CD8-positive, alpha-beta T cell (primary cell): ENCODE measurements at regions of chr19 and their contacts with region 1.

Region 1: DNA sequence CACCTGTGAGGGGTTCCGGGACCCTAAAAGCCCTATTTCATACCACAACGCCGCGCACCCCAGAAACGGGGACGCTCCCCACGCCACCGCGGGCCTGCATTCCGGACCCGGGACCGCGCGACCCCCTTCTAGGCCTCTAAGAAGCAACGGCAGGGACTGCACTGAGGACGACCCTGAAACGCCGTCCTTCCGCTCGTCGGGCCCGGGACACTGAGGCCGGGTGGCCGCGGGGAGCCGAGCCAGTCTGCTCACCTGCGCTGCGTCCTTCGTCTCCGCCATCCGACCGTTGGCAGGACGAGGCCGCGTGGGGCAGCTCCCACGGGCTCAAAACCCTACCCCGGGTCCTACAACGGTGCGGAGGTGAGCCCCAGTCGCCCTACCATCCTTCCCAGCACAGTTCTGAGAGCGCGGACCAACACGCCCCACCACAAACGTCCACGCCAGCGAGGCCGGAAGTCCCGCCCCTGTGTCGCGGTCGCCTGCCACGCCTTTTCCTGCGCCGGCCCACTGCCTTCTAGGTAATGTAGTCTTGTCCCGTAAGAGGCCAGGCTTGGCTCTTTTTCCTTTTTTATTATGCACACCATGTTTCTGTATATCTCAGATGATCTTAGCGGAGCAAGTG is at the start of gene ZNF550:
- DNase-seq: peak; percentile 74 to 92 (median 88)
- ATAC-seq: peak; percentile 96
- H3K4me3 ChIP-seq: peak within 1 kb of the TSS; percentile 77 to 89
- H3K4me3 Mint-ChIP-seq: peak within 1 kb of the TSS; percentile 98
- H3K27ac ChIP-seq: peak within 1 kb of the TSS; percentile 64 to 70
- H3K27ac Mint-ChIP-seq: peak within 1 kb of the TSS; percentile 96
- H3K4me1 ChIP-seq: peaks cover 20% of the 10 kb centered on the region
- H3K4me1 Mint-ChIP-seq: peaks cover 32% of the 10 kb centered on the region
- H3K27me3 ChIP-seq: no peaks in the 10 kb centered on the region
- H3K27me3 Mint-ChIP-seq: no peaks in the 10 kb centered on the region
- CTCF ChIP-seq: no peak
- total RNA-seq, gene ZNF550: 15.4 to 17.6 TPM

Region 2: GRCh38 chr19:57366776-57367175 is 192.7 kb before region 1 on chr19:
- CTCF ChIA-PET with region 1: no interaction called
- POLR2A ChIA-PET with region 1: no interaction called
- intact Hi-C with region 1: no loop called
- DNase-seq: no peak
- ATAC-seq: no peak
- H3K4me3 ChIP-seq: no peak overlapping the region
- H3K4me3 Mint-ChIP-seq: no peak overlapping the region
- H3K27ac ChIP-seq: no peak overlapping the region
- H3K27ac Mint-ChIP-seq: no peak overlapping the region
- H3K4me1 ChIP-seq: peaks cover 12% of the 10 kb centered on the region
- H3K4me1 Mint-ChIP-seq: peaks cover 18% of the 10 kb centered on the region
- H3K27me3 ChIP-seq: no peaks in the 10 kb centered on the region
- H3K27me3 Mint-ChIP-seq: no peaks in the 10 kb centered on the region
- CTCF ChIP-seq: no peak

Region 3: DNA sequence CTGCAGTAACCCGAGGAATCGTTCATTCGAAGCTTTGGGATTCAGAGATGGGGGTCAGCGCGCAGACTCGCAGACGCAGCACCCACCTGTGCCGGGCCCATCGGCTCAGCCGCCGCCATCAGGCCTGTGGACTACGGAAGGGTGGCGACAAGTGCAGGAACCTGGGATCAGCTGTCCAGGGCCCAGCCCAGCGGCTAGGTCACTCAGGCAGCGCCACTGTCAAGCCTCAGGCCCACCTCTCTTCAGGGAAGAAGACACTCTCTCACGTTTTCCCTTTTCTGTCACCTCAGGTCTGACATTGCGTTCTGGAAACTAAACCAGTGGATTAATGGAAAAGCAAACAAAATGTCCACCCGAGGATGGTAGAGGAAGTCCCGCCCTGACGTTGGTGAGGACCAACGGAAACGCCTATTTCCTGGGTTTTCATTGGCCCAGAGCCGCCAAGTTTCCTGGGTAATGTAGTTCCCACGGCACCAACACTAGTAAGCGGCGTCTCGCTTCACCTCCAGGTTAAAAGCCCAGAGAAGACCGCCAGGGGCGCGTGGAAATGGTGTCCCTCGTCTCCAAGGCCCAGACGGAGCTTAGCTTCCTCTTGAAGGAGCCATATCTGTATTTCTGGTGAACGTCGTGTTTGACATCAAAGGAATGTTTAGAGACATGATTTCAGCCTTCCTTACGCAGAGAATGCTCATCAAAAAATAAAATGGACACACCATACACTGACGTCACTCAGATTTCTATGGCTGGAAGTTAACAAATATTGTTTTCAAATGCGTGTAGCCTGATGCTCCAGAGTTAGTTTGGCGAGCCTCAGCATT is 82.1 kb before region 1 on chr19 and contains the start of gene ZNF772:
- CTCF ChIA-PET with region 1: no interaction called
- POLR2A ChIA-PET with region 1: interaction called, 3 read pairs
- intact Hi-C with region 1: loop called in 1 of 2 experiments (anchors 1 kb)
- DNase-seq: peak; percentile 76 to 95 (median 88)
- ATAC-seq: peak; percentile 99
- H3K4me3 ChIP-seq: peak within 1 kb of the TSS; percentile 78 to 86
- H3K4me3 Mint-ChIP-seq: peak within 1 kb of the TSS; percentile 88
- H3K27ac ChIP-seq: peak within 1 kb of the TSS; percentile 47 to 83
- H3K27ac Mint-ChIP-seq: peak within 1 kb of the TSS; percentile 92
- H3K4me1 ChIP-seq: peaks cover 8% of the 10 kb centered on the region
- H3K4me1 Mint-ChIP-seq: peaks cover 14% of the 10 kb centered on the region
- H3K27me3 ChIP-seq: peaks cover 0 to 2% of the 10 kb centered on the region in 2 experiments
- H3K27me3 Mint-ChIP-seq: peaks cover 2% of the 10 kb centered on the region
- CTCF ChIP-seq: peak; percentile 65
- total RNA-seq, gene ZNF772: 0.41 to 0.97 TPM

Region 4: DNA sequence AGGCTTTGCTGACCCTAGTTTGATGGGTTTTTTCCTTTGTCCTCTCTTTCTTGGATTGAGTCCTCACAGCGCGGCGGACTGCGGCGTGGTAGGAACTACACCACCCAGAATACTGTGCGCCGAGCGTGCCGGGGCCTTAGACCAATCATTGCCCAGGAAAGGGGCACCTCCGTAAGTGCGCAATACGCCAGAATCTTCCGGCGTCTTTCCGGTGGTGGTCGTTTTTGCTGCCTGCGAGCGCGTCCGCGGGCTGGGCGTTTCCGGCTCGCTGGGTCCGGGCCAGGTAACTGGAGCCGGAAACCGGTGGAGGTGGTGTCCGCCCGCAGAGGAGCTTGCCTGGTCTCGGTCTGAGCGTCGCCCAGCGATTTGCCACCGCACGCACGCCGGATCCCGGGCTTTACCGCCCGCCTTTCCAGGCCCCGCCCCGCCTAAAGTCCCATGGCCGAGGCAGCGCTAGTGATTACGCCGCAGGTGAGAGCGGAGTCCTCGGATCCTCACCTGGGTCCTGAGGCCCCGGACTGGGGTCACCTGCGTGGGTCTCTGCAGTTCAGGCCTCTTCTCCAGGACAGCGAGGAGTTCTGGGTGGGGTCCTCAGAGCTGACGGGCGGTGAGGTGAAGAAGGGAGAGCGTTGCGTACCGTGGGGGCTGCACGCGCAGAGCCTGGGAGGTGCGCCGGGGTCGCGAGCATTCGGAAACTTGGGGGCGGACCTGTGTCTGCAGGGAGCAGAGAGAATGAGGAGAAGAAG is 32.2 kb before region 1 on chr19 and contains the start of gene ZNF549:
- CTCF ChIA-PET with region 1: no interaction called
- POLR2A ChIA-PET with region 1: no interaction called
- intact Hi-C with region 1: loop called (anchors 1 kb)
- DNase-seq: peak; percentile 77 to 95 (median 89)
- ATAC-seq: peak; percentile 98
- H3K4me3 ChIP-seq: peak within 1 kb of the TSS; percentile 97
- H3K4me3 Mint-ChIP-seq: peak within 1 kb of the TSS; percentile 94
- H3K27ac ChIP-seq: peak within 1 kb of the TSS; percentile 80 to 88
- H3K27ac Mint-ChIP-seq: peak within 1 kb of the TSS; percentile 96
- H3K4me1 ChIP-seq: peaks cover 16% of the 10 kb centered on the region
- H3K4me1 Mint-ChIP-seq: peaks cover 32% of the 10 kb centered on the region
- H3K27me3 ChIP-seq: no peaks in the 10 kb centered on the region
- H3K27me3 Mint-ChIP-seq: no peaks in the 10 kb centered on the region
- CTCF ChIP-seq: no peak
- total RNA-seq, gene ZNF549: 14.6 to 17.1 TPM

Region 5: DNA sequence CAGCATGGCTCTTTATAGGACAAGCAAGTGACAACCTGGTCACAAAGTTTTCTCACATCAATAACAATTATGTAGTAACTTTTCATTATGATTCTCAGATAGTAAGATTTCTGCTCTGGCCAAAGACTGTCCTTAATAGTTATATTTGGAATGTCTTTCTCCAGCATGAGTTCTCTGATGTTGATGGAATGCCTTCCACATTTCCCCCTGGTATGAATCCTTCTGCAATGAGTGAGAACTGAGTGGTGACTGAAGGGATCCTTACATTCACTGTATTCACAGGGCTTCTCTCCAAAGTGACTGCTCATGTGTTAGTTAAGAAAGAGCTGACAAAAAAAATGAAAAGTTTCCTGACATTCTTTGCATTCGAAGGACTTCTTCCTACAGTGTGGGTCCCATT is 13.0 kb before region 1 on chr19:
- CTCF ChIA-PET with region 1: no interaction called
- POLR2A ChIA-PET with region 1: no interaction called
- intact Hi-C with region 1: no loop called
- DNase-seq: no peak
- ATAC-seq: no peak
- H3K4me3 ChIP-seq: peak overlapping the region in 1 of 2 experiments; percentile 4
- H3K4me3 Mint-ChIP-seq: no peak overlapping the region
- H3K27ac ChIP-seq: no peak overlapping the region
- H3K27ac Mint-ChIP-seq: no peak overlapping the region
- H3K4me1 ChIP-seq: no peaks in the 10 kb centered on the region
- H3K4me1 Mint-ChIP-seq: no peaks in the 10 kb centered on the region
- H3K27me3 ChIP-seq: no peaks in the 10 kb centered on the region
- H3K27me3 Mint-ChIP-seq: no peaks in the 10 kb centered on the region
- CTCF ChIP-seq: no peak

Region 6: DNA sequence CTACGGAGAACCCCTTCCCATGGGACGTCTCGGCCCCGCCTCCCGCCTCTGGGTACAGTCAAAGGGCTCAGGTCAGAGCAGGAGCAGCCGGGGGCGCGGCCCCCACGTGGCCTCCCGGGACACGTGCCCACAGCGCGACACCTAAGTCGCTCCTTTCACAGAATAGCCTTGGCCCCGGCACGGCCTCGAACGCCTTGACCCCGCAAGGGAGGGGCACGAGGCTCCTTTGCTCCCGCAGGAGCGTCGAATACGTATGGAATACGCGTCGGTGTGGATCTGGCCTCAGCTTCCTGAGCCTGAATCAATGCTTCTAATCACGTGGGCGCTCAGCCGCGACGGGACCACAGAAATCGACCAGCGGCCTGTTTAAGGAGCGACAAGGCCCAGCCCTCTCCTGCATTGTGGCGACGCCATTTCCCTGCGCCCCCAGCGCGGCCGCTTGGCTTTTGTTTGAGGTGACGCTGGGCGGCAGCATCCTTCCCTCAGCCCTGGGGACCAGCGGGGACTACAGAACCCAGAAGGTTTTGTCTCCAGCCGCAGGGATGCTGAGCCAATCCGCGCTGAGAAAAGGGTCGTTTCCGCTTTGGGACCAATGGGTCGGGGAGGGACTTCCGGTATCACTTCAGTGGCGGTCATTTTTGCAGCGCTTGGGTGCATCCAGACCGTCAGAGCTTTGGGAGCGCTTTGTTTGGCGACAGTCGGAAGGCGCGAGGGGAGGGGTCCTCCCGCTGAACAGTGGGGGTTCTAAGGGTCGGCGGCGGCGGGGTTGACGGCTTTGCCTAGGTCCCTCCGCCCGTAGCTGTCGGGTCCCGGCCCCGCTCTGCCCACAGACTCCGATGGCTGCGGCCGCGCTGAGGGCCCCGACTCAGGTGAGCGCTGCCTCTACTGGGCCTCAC is 24.3 kb after region 1 on chr19 and contains the start of gene ZIK1:
- CTCF ChIA-PET with region 1: no interaction called
- POLR2A ChIA-PET with region 1: no interaction called
- intact Hi-C with region 1: loop called (anchors 1 kb)
- DNase-seq: peak; percentile 75 to 95 (median 88)
- ATAC-seq: peak; percentile 87
- H3K4me3 ChIP-seq: peak within 1 kb of the TSS; percentile 59 to 67
- H3K4me3 Mint-ChIP-seq: peak within 1 kb of the TSS; percentile 98
- H3K27ac ChIP-seq: peak within 1 kb of the TSS; percentile 37 to 56
- H3K27ac Mint-ChIP-seq: peak within 1 kb of the TSS; percentile 91
- H3K4me1 ChIP-seq: peaks cover 21% of the 10 kb centered on the region
- H3K4me1 Mint-ChIP-seq: peaks cover 19% of the 10 kb centered on the region
- H3K27me3 ChIP-seq: no peaks in the 10 kb centered on the region
- H3K27me3 Mint-ChIP-seq: no peaks in the 10 kb centered on the region
- CTCF ChIP-seq: peak; percentile 12
- total RNA-seq, gene ZIK1: 10.0 to 12.8 TPM

Region 7: DNA sequence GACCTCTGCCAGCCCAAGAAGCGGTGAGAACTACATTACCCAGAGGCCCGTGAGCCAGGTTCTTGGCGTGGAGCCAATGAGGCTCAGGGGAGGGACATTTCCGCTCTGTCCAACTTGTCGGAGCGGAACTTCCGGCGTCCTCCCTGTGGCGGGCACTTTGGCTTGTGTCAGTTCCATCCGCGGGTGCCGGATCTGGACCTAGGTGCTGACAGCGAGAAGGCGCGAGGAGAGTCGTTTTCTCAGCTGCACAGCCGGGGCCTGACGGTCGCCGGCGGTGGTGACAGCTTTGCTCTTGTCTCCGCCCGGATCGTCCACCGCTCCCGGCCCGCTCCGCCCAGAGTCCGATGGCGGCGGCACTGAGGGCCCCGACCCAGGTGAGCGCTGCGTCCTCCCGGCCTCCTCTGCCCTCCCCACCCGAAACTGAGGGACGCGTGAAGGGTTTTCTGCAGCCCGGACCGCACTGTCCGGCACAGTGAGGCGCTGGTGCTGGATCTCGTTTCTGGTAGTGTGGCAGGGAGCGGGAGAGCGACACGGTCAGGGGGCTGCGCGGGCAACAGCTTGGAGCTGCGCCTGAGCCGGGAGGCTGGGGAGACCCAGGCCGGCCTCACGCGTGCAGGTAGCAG is 40.4 kb after region 1 on chr19 and contains the start of gene ZNF530:
- CTCF ChIA-PET with region 1: no interaction called
- POLR2A ChIA-PET with region 1: no interaction called
- intact Hi-C with region 1: loop called in 1 of 2 experiments (anchors 1 kb)
- DNase-seq: peak; percentile 61 to 93 (median 88)
- ATAC-seq: peak; percentile 86
- H3K4me3 ChIP-seq: peak within 1 kb of the TSS; percentile 67 to 81
- H3K4me3 Mint-ChIP-seq: peak within 1 kb of the TSS; percentile 88
- H3K27ac ChIP-seq: peak within 1 kb of the TSS; percentile 16 to 51
- H3K27ac Mint-ChIP-seq: peak within 1 kb of the TSS; percentile 33
- H3K4me1 ChIP-seq: peaks cover 13% of the 10 kb centered on the region
- H3K4me1 Mint-ChIP-seq: peaks cover 25% of the 10 kb centered on the region
- H3K27me3 ChIP-seq: no peaks in the 10 kb centered on the region
- H3K27me3 Mint-ChIP-seq: no peaks in the 10 kb centered on the region
- CTCF ChIP-seq: no peak
- total RNA-seq, gene ZNF530: 3.6 to 4.2 TPM